IMR-90 (cell line): ENCODE measurements at regions of chr5 and their contacts with region 1.

Region 1: GRCh38 chr5:6675763-6676499 is 37.3 kb upstream of the TENT4A start:
- DNase-seq: no peak
- ATAC-seq: no peak
- H3K4me3 ChIP-seq: no peak overlapping the region
- H3K27ac ChIP-seq: no peak overlapping the region
- H3K4me1 ChIP-seq: no peaks in the 10 kb centered on the region; the same call in 1 of the 2 replicates
- H3K27me3 ChIP-seq: no peaks in the 10 kb centered on the region
- CTCF ChIP-seq: no peak
- POLR2A ChIP-seq: no peak
- RAD21 ChIP-seq: no peak

Region 2: GRCh38 chr5:6804766-6805501 is 129.0 kb after region 1 on chr5:
- CTCF ChIA-PET with region 1: no interaction called
- POLR2A ChIA-PET with region 1: interaction called, 13 read pairs
- dilution Hi-C with region 1: no loop called
- in situ Hi-C with region 1: no loop called
- intact Hi-C with region 1: no loop called
- DNase-seq: peak; percentile 33
- ATAC-seq: peak; percentile 91
- H3K4me3 ChIP-seq: no peak overlapping the region
- H3K27ac ChIP-seq: no peak overlapping the region
- H3K4me1 ChIP-seq: no peaks in the 10 kb centered on the region
- H3K27me3 ChIP-seq: no peaks in the 10 kb centered on the region
- CTCF ChIP-seq: no peak
- POLR2A ChIP-seq: no peak
- RAD21 ChIP-seq: no peak

Region 3: GRCh38 chr5:6905883-6906282 is 230.0 kb after region 1 on chr5:
- CTCF ChIA-PET with region 1: no interaction called
- POLR2A ChIA-PET with region 1: no interaction called
- dilution Hi-C with region 1: no loop called
- in situ Hi-C with region 1: no loop called
- intact Hi-C with region 1: no loop called
- DNase-seq: no peak
- ATAC-seq: no peak
- H3K4me3 ChIP-seq: no peak overlapping the region
- H3K27ac ChIP-seq: no peak overlapping the region
- H3K4me1 ChIP-seq: no peaks in the 10 kb centered on the region
- H3K27me3 ChIP-seq: no peaks in the 10 kb centered on the region
- CTCF ChIP-seq: no peak
- POLR2A ChIP-seq: no peak
- RAD21 ChIP-seq: no peak